Activated naive CD4-positive, alpha-beta T cell treated with anti-CD3 and anti-CD28 coated beads for 36 hours (primary cell): ENCODE measurements at regions of chr12 and their contacts with region 1.

Region 1: DNA sequence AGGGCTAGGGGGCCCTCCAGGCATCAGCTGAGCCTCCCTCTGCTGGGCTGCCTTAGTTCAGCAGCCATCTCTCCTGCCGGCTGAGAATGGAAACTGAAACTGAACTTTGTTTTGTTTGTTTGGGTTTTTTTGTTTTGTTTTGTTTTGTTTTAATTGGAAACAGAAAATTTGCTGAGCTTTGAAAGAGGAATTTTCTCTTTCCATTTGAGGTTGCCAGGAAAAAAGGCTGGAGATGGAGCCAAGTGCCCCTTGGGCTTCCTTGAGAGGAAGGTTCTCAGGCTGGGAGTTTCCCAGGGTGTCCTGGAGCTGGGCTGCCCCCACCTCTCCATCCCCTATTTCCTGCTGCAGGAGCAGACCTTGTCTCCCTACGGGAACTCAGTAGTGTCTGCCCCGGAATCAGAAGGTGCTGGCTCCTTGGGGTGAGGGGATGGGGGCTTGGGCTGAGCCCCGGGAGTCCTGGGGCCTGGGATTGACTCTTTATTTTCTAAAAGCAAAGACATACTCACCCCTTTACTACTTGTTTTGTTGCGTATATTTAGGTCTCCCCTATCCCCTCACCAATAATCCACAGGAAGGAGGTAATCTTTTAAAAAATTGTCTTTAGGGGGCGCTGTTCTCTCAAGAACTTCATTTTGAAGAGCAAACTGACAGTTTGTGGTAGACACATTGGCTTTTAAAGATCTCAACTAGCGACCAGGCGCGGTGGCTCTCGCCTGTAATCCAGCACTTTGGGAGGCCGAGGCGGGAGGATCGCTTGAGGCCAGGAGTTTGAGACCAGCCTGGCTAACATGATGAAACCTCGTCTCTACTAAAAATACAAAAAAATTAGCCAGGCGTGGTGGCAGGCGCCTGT is 21.3 kb upstream of the OASL start:
- DNase-seq: peak; percentile 66
- H3K4me3 Mint-ChIP-seq: peak overlapping the region; percentile 64
- H3K27ac Mint-ChIP-seq: peak overlapping the region; percentile 63
- H3K4me1 Mint-ChIP-seq: peaks cover 16% of the 10 kb centered on the region
- H3K27me3 Mint-ChIP-seq: no peaks in the 10 kb centered on the region

Region 2: GRCh38 chr12:120175062-120175461 is 885.3 kb before region 1 on chr12:
- CTCF ChIA-PET with region 1: no interaction called
- intact Hi-C with region 1: no loop called
- DNase-seq: no peak
- H3K4me3 Mint-ChIP-seq: no peak overlapping the region
- H3K27ac Mint-ChIP-seq: no peak overlapping the region
- H3K4me1 Mint-ChIP-seq: no peaks in the 10 kb centered on the region
- H3K27me3 Mint-ChIP-seq: no peaks in the 10 kb centered on the region

Region 3: DNA sequence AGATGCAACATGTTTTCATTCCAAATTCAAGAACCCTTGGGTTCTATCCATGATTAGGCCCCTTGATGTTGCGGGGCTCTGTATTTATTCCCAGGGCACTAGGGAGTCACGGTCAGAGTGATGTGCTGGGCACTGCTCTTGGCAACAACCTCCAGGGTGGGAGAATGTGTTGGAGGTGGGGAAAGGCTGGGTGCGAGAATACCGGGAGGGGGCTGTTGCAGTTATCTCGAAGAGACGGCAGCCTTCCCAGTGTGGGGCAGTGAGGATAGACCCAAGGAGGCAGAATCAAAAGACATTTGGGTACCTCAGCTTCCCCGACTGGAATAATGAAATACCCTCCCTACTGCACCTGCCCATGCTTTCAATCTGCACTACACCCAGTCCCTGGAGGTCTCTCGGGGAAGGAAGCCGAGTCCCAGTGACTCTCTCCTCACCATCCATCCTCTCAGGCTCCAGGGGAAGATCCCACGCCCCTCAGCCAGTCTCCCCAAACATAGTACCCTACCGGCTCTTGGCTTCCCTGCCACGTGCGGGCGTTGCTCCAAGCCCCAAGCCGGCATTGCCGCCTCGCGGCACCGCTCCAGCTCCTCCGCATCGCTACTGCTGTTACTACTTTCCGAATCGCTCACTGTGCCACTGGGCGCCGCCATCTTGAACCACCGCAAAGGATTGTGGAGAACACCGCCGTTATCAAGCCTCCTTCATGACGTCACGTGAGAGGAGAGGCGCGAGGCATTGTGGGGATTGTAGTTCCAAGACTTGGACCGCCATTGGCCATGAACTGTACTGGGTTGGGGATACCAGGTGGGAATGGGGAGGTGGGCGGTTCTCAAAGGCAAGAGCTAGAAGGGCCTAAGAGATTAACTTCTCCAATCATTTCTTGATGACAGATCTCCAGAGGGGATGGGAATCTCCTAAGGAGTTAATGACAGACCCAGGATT is 44.3 kb before region 1 on chr12 and contains the start of gene C12orf43:
- CTCF ChIA-PET with region 1: interaction called, 5 read pairs
- intact Hi-C with region 1: loop called (anchors 1 kb)
- DNase-seq: peak; percentile 98
- H3K4me3 Mint-ChIP-seq: peak within 1 kb of the TSS; percentile 100
- H3K27ac Mint-ChIP-seq: peak within 1 kb of the TSS; percentile 92
- H3K4me1 Mint-ChIP-seq: peaks cover 23% of the 10 kb centered on the region
- H3K27me3 Mint-ChIP-seq: no peaks in the 10 kb centered on the region
- total RNA-seq, gene C12orf43: 14.1 to 15.0 TPM

Region 4: DNA sequence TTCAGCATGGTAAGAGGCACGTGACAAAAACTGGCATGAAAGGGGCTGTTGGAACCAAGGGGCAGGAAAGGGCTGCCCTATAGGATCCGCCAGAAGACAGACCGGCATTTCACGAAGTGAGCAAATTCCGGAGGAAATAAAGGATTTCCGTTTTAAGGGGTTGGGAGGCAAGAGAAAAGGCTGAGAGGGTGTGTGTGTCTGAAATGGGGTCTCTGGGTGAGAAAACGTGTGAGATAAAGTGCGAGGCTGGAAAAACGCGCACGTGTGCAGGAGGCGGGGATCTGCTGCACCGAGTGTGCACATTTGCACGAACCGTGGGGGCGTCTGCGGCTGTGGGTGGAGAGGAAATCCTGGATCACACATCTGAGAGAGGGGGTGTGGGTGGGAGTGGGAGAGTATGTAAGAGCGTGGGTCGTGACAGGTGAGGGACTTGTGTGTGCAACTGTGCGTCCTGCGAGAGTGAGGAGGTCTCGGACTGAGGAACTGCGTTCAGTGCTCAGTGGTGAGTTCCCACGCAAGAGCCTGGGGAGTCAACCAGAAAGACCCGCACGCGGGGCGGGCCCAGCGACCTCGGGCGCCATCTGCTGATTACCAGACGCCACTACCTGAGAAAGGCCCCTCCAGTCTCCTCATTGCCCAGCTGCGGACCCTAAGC is 35.3 kb after region 1 on chr12:
- CTCF ChIA-PET with region 1: interaction called, 28 read pairs
- intact Hi-C with region 1: loop called (anchors 1 kb)
- DNase-seq: peak; percentile 85
- H3K4me3 Mint-ChIP-seq: peak overlapping the region; percentile 71
- H3K27ac Mint-ChIP-seq: no peak overlapping the region
- H3K4me1 Mint-ChIP-seq: peaks cover 33% of the 10 kb centered on the region
- H3K27me3 Mint-ChIP-seq: peaks cover 6% of the 10 kb centered on the region

Region 5: DNA sequence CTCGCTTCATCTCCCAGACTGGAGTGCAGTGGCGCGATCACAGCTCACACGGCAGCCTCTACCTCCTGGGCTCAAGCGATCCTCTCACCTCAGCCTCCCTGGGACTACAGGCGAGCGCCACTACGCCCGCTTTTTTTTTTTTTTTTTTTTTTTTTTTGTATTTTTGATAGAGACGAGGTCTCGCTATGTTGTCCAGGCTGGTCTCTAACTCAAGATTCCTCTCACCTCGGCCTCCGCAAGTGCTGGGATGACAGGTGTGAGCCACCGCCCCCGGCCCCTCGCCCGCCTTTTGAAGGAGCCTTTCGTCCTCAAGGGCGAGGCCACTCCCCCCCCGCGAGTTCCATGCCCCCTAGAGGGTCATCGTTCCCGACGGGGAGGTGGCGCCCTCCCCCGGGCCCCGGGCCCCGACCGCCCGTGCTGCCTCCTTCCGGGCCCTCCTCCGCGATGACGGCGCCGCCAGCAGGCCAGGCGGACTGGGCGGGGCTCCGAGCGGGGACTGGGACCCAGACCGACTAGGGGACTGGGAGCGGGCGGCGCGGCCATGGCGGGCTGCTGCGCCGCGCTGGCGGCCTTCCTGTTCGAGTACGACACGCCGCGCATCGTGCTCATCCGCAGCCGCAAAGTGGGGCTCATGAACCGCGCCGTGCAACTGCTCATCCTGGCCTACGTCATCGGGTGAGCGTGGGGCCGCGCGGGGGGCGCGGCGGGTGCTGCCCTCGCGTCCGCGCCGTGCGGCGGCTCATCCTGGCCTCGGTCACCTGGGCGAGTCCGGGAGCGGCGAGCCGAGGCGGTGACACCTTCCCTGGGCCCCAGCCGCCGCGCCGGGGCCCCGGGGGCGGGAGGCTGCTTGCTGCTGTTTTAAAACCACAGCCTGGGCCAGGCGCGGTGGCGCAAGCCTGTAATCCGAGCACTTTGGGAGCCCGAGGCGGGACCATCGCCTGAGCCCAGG is 149.5 kb after region 1 on chr12 and contains the start of gene P2RX4:
- CTCF ChIA-PET with region 1: no interaction called
- intact Hi-C with region 1: loop called (anchors 1 kb)
- DNase-seq: peak; percentile 91
- H3K4me3 Mint-ChIP-seq: peak within 1 kb of the TSS; percentile 81
- H3K27ac Mint-ChIP-seq: peak within 1 kb of the TSS; percentile 89
- H3K4me1 Mint-ChIP-seq: peaks cover 23% of the 10 kb centered on the region
- H3K27me3 Mint-ChIP-seq: no peaks in the 10 kb centered on the region
- total RNA-seq, gene P2RX4: 14.2 to 18.0 TPM

Region 6: GRCh38 chr12:121230538-121230907 is 170.1 kb after region 1 on chr12:
- CTCF ChIA-PET with region 1: interaction called, 3 read pairs
- intact Hi-C with region 1: loop called (anchors 2 kb)
- DNase-seq: no peak
- H3K4me3 Mint-ChIP-seq: no peak overlapping the region
- H3K27ac Mint-ChIP-seq: no peak overlapping the region
- H3K4me1 Mint-ChIP-seq: peaks cover 22% of the 10 kb centered on the region
- H3K27me3 Mint-ChIP-seq: no peaks in the 10 kb centered on the region